ENCODE measurements at regions of chr7 and their contacts with region 1.

Region 1: GRCh38 chr7:77866786-77867536 is 68.4 kb downstream of the PHTF2 start:
- DNase-seq: no peak
- H3K4me3 Mint-ChIP-seq: no peak overlapping the region
- H3K27ac Mint-ChIP-seq: no peak overlapping the region
- H3K4me1 Mint-ChIP-seq: peaks cover 14% of the 10 kb centered on the region
- H3K27me3 Mint-ChIP-seq: no peaks in the 10 kb centered on the region

Region 2: DNA sequence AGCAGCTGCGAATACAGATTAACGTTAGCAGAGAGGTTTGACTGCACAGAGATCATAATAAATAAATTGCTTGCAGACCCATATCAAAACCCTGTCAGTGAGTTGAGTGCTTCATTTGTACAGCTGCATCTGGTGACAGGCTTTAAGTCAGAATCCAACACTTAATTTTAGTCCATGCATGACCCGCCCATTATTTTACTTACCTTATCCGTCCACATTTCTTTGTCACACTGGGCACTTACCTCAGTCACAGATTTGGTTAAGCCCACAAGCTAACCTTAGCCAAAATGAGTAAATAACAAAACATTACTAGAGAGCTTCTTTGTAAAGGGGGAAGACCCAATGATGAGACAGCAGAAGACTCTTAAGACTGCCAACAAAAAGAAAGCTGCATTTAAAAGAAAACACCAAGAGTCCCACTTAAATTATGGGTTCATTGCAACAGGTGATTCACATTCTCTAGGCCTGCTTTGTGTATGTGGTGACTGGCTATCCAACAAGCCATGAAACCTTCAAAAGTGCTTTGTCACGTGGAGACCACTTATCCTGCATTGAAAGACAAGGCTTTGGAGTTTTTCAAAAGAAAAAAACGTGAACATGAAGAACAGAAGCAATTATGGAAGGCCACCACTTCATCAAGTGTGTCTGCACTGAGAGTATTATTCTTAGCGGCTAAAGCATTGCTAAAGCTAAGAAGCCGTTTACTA is 36.2 kb before region 1 on chr7:
- intact Hi-C with region 1: loop called (anchors 5 kb)
- DNase-seq: no peak
- H3K4me3 Mint-ChIP-seq: no peak overlapping the region
- H3K27ac Mint-ChIP-seq: no peak overlapping the region
- H3K4me1 Mint-ChIP-seq: peaks cover 51% of the 10 kb centered on the region
- H3K27me3 Mint-ChIP-seq: no peaks in the 10 kb centered on the region